Activated CD4-positive, alpha-beta T cell treated with anti-CD3 and anti-CD28 coated beads for 36 hours (primary cell): ENCODE measurements at regions of chr6 and their contacts with region 1.

Region 1: GRCh38 chr6:52407467-52407866 is 12.7 kb upstream of the EFHC1 start:
- DNase-seq: no peak
- ATAC-seq: peak; percentile 87
- H3K4me3 Mint-ChIP-seq: no peak overlapping the region
- H3K27ac Mint-ChIP-seq: no peak overlapping the region
- H3K4me1 Mint-ChIP-seq: peaks cover 14% of the 10 kb centered on the region
- H3K27me3 Mint-ChIP-seq: no peaks in the 10 kb centered on the region

Region 2: DNA sequence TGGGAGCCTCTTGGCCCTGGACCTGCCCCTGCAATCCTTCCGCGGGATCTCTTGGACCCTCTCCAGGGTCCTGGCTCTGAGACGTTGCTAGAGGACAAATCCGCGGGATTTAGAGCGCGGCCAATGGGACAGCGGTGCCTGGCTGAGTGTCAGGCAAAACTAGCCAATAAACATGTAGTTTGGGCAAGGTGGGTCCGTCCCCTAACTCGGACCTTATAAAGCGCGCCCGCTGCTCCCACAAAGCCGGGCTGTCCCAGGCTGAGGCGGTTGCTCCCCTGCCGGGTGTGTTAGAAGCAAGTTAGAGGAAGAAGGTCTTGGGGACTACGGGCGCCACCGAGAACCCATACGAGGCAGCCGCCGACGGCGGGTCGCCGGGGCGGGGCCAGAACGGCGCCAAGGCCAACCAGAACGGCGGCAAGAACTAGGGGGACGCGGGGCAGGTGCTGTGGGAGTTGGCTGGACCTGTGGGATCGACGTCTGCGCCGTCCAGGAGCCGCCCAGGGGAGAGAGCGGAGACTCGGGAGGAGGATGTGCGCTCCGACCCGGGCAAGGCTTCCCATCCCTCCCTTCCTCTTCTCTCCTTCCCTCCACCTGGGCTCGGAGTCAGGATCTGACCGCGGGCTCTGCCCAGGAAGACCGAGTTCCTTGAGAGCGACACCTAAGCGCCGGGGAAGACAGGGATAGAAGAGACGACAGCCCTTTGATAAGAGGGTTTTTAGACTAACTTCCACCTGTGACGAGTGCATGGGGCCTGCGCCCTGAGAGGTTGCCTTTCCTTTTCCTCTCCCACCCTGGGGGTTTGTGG is 256.9 kb after region 1 on chr6:
- CTCF ChIA-PET with region 1: interaction called, 14 read pairs
- POLR2A ChIA-PET with region 1: no interaction called
- intact Hi-C with region 1: loop called (anchors 2 kb)
- DNase-seq: peak; percentile 86
- ATAC-seq: peak; percentile 99
- H3K4me3 Mint-ChIP-seq: no peak overlapping the region
- H3K27ac Mint-ChIP-seq: no peak overlapping the region
- H3K4me1 Mint-ChIP-seq: peaks cover 11% of the 10 kb centered on the region
- H3K27me3 Mint-ChIP-seq: no peaks in the 10 kb centered on the region

Region 3: GRCh38 chr6:52686878-52687699 is 279.6 kb after region 1 on chr6:
- CTCF ChIA-PET with region 1: no interaction called
- POLR2A ChIA-PET with region 1: no interaction called
- intact Hi-C with region 1: no loop called
- DNase-seq: no peak
- ATAC-seq: no peak
- H3K4me3 Mint-ChIP-seq: no peak overlapping the region
- H3K27ac Mint-ChIP-seq: no peak overlapping the region
- H3K4me1 Mint-ChIP-seq: peaks cover 3% of the 10 kb centered on the region
- H3K27me3 Mint-ChIP-seq: no peaks in the 10 kb centered on the region